CD4-positive, alpha-beta memory T cell (primary cell): ENCODE measurements at regions of chr11 and their contacts with region 1.

Region 1: DNA sequence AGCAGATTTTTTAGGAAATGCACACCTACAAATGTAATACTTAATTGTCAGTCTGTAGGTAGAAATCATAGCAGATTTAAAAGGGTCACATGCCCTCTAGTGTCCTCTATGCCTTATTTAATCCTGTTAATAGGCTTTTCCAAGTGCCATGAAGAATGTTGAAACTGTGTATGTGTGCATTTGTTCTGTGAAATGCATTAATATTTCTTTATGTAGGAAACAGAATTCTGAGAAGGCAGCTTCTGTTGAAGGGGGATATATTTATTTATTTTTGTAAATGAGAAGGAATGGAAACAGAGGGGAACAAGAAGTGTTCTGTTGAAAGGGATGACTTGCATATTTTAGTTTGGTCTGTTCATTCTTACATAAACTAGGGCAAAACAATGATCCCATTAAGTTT is 51.0 kb downstream of the SVIP start:
- DNase-seq: no peak
- H3K4me3 ChIP-seq: no peak overlapping the region
- H3K4me3 Mint-ChIP-seq: no peak overlapping the region
- H3K27ac ChIP-seq: no peak overlapping the region
- H3K27ac Mint-ChIP-seq: no peak overlapping the region
- H3K4me1 ChIP-seq: no peaks in the 10 kb centered on the region
- H3K4me1 Mint-ChIP-seq: peaks cover 2 to 7% (median 5%) of the 10 kb centered on the region in 4 donors
- H3K27me3 ChIP-seq: no peaks in the 10 kb centered on the region
- H3K27me3 Mint-ChIP-seq: peaks cover 8 to 14% of the 10 kb centered on the region in 2 donors

Region 2: DNA sequence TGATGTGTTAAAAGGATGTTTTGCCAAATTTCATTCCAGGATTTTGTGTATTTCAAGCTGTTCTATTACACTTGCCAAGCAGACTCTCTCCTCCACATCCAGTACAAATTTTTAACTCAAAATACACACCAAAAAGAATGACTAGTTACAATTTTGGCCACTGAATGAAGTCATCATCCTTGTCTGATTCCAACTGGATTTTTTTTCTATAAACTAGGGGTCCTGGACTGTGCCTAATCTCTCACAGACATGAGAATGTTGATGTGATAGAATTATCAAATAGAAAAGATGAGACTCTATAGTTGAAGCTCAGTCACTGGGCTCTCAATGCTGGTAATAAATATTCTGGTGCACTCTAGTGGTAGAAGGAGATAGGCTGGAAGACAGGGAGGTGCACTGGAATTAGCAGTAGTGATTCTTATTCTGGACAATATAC is 238.8 kb before region 1 on chr11:
- CTCF ChIA-PET with region 1: no interaction called
- POLR2A ChIA-PET with region 1: no interaction called
- intact Hi-C with region 1: loop called (anchors 10 kb)
- DNase-seq: no peak
- H3K4me3 ChIP-seq: no peak overlapping the region
- H3K4me3 Mint-ChIP-seq: no peak overlapping the region
- H3K27ac ChIP-seq: no peak overlapping the region
- H3K27ac Mint-ChIP-seq: no peak overlapping the region
- H3K4me1 ChIP-seq: no peaks in the 10 kb centered on the region
- H3K4me1 Mint-ChIP-seq: no peaks in the 10 kb centered on the region
- H3K27me3 ChIP-seq: no peaks in the 10 kb centered on the region
- H3K27me3 Mint-ChIP-seq: peaks cover 1 to 8% of the 10 kb centered on the region in 2 donors

Region 3: DNA sequence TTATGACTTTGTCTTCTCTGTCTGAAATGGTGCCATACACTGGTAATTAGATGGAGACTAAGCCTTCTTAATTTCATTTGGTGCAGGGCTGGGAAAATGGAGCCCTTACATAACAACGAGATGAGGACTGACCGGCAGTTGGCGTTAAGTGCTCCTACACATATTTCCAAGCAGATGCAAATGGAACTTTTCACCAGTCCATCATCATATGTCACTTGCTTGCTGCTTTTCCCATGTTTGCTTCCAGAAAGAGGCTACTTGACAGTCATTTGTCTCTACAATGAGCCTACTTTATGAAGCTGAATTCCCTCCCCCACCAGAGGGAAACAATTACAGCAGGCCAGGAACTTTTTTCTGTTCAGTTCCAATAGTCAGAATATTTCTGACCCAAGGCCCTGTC is 18.4 kb after region 1 on chr11:
- CTCF ChIA-PET with region 1: no interaction called
- POLR2A ChIA-PET with region 1: no interaction called
- intact Hi-C with region 1: no loop called
- DNase-seq: no peak
- H3K4me3 ChIP-seq: no peak overlapping the region
- H3K4me3 Mint-ChIP-seq: no peak overlapping the region
- H3K27ac ChIP-seq: no peak overlapping the region
- H3K27ac Mint-ChIP-seq: no peak overlapping the region
- H3K4me1 ChIP-seq: no peaks in the 10 kb centered on the region
- H3K4me1 Mint-ChIP-seq: peaks cover 0 to 1% (median 0%) of the 10 kb centered on the region in 4 donors
- H3K27me3 ChIP-seq: no peaks in the 10 kb centered on the region
- H3K27me3 Mint-ChIP-seq: peaks cover 1 to 9% of the 10 kb centered on the region in 2 donors